ENCODE measurements at regions of chr10 and their contacts with region 1.

Region 1: DNA sequence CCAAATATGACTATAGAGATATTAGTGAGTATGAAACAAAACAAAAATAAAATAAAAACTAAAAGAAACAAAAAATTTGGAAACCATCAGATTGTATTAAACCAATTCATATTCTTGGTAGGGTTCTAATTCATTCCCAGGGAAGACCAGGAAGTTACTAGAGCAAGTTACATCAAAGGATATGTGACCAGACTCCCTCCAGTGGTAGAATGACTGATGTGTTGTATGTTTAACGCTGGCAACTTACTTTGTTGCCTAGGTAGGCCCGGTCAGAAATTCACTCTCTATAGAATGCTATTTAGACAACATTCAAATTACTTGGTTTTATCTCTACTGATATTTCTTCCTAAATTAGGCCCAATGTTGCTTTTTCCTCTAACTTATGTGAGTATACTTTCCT is 5.2 kb downstream of the PHYHIPL start:
- DNase-seq: peak; percentile 65
- H3K4me3 Mint-ChIP-seq: no peak overlapping the region
- H3K27ac Mint-ChIP-seq: no peak overlapping the region
- H3K4me1 Mint-ChIP-seq: no peaks in the 10 kb centered on the region
- H3K27me3 Mint-ChIP-seq: peaks cover 10% of the 10 kb centered on the region
- CTCF ChIP-seq: peak; percentile 48

Region 2: DNA sequence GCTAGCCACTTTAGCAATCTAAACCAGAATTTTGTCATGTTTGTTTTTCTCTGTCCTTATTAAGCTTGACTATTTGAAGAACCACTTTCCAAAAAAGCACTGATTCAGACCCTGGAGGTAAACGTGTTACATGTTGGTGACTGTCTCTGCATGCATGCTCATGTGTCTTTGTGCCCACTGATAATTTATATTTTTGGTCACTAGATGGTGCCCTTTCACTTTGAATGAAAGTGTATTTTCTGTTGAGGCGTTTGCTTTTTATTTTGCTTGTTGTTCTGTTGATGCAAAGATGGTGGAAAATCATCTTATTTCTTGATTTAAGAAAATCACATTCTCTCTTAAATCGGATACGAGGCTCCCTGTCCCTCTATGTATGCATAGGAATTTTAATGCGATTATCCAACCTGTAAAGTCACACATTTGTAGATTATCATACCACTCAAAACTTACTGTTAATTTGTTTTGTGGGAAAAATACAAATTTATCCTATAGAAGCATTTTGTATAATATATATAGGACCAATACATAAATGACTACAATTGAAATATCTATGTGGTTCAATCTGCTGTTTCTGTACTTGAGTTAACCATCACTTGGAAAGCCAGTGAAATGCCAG is 399.7 kb before region 1 on chr10:
- CTCF ChIA-PET with region 1: no interaction called
- POLR2A ChIA-PET with region 1: no interaction called
- intact Hi-C with region 1: loop called (anchors 1 kb)
- DNase-seq: peak; percentile 59
- H3K4me3 Mint-ChIP-seq: no peak overlapping the region
- H3K27ac Mint-ChIP-seq: no peak overlapping the region
- H3K4me1 Mint-ChIP-seq: peaks cover 22% of the 10 kb centered on the region
- H3K27me3 Mint-ChIP-seq: no peaks in the 10 kb centered on the region
- CTCF ChIP-seq: peak; percentile 52

Region 3: GRCh38 chr10:58818900-58819299 is 362.8 kb before region 1 on chr10:
- CTCF ChIA-PET with region 1: no interaction called
- POLR2A ChIA-PET with region 1: no interaction called
- intact Hi-C with region 1: loop called (anchors 2 kb)
- DNase-seq: peak; percentile 85
- H3K4me3 Mint-ChIP-seq: no peak overlapping the region
- H3K27ac Mint-ChIP-seq: peak overlapping the region; percentile 39
- H3K4me1 Mint-ChIP-seq: peaks cover 23% of the 10 kb centered on the region
- H3K27me3 Mint-ChIP-seq: no peaks in the 10 kb centered on the region
- CTCF ChIP-seq: peak; percentile 11

Region 4: DNA sequence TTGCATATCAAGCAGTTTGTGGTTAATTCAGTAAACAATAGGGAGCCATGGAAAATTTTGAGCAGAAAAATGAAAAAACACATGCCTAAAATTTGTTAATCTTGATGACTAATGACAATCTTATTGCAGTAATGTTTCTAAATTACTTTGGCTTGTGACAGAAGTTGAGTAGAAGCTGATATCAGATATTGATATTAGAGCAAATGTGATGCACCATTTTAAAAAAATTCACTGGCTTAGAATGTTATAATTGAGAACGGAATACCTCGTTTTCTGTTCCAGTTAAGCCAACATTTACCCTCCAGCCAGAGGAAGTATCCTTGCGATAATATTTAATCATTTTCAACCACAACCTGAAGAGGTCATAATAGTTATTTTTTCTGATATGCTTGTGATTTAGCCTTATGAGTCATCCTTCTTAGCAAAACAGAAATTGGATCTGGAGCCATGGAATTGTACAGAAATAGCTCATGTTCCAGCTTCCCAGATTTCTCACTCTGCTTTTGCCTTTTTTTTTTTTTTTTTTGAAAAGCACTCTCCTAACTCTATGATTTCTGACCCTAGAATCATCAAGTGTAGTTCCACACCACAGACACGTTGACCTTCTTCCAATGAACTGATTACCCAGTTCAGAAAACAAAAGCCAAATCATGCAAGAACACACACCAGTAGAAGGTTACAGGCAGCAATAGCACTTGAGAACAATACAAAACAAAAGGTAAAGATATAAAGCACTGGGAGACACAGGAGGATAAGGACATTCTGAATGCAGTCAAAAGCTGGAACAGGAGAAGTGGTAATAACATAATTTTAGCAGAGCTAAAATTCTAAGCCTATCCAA is 102.1 kb before region 1 on chr10:
- CTCF ChIA-PET with region 1: interaction called, 3 read pairs
- POLR2A ChIA-PET with region 1: no interaction called
- intact Hi-C with region 1: loop called (anchors 1 kb)
- DNase-seq: peak; percentile 75
- H3K4me3 Mint-ChIP-seq: no peak overlapping the region
- H3K27ac Mint-ChIP-seq: no peak overlapping the region
- H3K4me1 Mint-ChIP-seq: peaks cover 16% of the 10 kb centered on the region
- H3K27me3 Mint-ChIP-seq: peaks cover 30% of the 10 kb centered on the region
- CTCF ChIP-seq: no peak